Activated CD4-positive, alpha-beta T cell treated with anti-CD3 and anti-CD28 coated beads for 36 hours (primary cell): ENCODE measurements at regions of chr12 and their contacts with region 1.

Region 1: GRCh38 chr12:54398995-54399793 is 14.7 kb upstream of the ZNF385A start:
- DNase-seq: peak; percentile 92
- ATAC-seq: peak; percentile 95
- H3K4me3 Mint-ChIP-seq: no peak overlapping the region
- H3K27ac Mint-ChIP-seq: no peak overlapping the region
- H3K4me1 Mint-ChIP-seq: peaks cover 6% of the 10 kb centered on the region
- H3K27me3 Mint-ChIP-seq: no peaks in the 10 kb centered on the region

Region 2: DNA sequence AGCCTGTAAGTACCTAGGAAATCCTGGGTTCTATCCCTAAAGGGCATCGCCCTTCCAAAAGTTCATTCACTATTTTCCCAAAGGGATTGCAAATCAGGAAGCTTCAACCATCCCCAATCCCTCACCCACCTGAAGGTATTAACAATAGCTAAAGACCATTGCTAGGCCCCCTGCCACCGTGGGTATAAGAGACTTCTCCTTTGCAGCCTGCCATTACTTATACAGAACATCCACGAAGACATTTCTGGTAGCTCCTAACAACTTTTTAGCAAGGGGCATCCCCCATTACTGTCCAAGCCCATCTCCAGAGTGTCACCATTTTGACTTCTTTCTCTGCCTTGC is 210.0 kb before region 1 on chr12:
- CTCF ChIA-PET with region 1: no interaction called
- POLR2A ChIA-PET with region 1: no interaction called
- intact Hi-C with region 1: no loop called
- DNase-seq: no peak
- ATAC-seq: peak; percentile 2
- H3K4me3 Mint-ChIP-seq: peak overlapping the region; percentile 85
- H3K27ac Mint-ChIP-seq: no peak overlapping the region
- H3K4me1 Mint-ChIP-seq: peaks cover 20% of the 10 kb centered on the region
- H3K27me3 Mint-ChIP-seq: peaks cover 19% of the 10 kb centered on the region

Region 3: DNA sequence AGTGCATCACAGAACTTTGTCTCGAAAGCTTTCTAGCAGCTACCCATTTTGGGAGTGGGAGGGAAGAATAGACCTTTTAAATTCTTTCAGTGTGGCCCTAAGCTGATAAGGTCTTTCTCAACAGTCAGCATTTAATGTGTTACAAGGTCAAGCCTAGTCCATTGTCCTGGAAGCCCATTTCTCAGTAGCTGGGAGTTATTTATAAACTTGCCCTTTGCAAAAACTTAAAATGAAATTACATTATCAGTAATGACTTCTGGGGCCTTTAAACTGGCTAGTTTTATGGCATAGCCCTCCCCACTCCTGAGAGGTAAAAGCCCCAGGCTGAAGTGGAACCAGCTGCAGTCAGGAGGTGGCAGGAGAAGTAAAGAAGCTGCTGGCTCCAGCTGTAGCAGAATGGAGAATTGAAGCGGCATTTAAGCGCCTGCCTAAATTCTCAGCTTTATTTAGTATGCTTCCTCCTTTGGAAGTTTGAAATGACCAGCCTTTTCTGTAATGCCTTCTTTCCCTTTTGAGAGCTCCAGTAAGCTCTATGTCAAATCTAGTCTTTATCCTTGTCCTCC is 61.8 kb before region 1 on chr12:
- CTCF ChIA-PET with region 1: interaction called, 13 read pairs
- POLR2A ChIA-PET with region 1: no interaction called
- intact Hi-C with region 1: no loop called
- DNase-seq: no peak
- ATAC-seq: no peak
- H3K4me3 Mint-ChIP-seq: no peak overlapping the region
- H3K27ac Mint-ChIP-seq: no peak overlapping the region
- H3K4me1 Mint-ChIP-seq: peaks cover 13% of the 10 kb centered on the region
- H3K27me3 Mint-ChIP-seq: no peaks in the 10 kb centered on the region

Region 4: GRCh38 chr12:54411391-54412241 is 12.4 kb after region 1 on chr12:
- CTCF ChIA-PET with region 1: interaction called, 260 read pairs
- POLR2A ChIA-PET with region 1: interaction called, 3 read pairs
- intact Hi-C with region 1: loop called in 1 of 2 experiments (anchors 2 kb)
- DNase-seq: peak; percentile 80
- ATAC-seq: peak; percentile 85
- H3K4me3 Mint-ChIP-seq: peak overlapping the region; percentile 60
- H3K27ac Mint-ChIP-seq: peak overlapping the region; percentile 89
- H3K4me1 Mint-ChIP-seq: peaks cover 55% of the 10 kb centered on the region
- H3K27me3 Mint-ChIP-seq: no peaks in the 10 kb centered on the region

Region 5: GRCh38 chr12:54439521-54440255 is 40.5 kb after region 1 on chr12:
- CTCF ChIA-PET with region 1: interaction called, 638 read pairs
- POLR2A ChIA-PET with region 1: no interaction called
- intact Hi-C with region 1: loop called (anchors 1 kb)
- DNase-seq: no peak
- ATAC-seq: peak; percentile 85
- H3K4me3 Mint-ChIP-seq: no peak overlapping the region
- H3K27ac Mint-ChIP-seq: no peak overlapping the region
- H3K4me1 Mint-ChIP-seq: peaks cover 9% of the 10 kb centered on the region
- H3K27me3 Mint-ChIP-seq: no peaks in the 10 kb centered on the region

Region 6: GRCh38 chr12:54497883-54498282 is 98.7 kb after region 1 on chr12:
- CTCF ChIA-PET with region 1: interaction called, 15 read pairs
- POLR2A ChIA-PET with region 1: no interaction called
- intact Hi-C with region 1: no loop called
- DNase-seq: no peak
- ATAC-seq: peak; percentile 4
- H3K4me3 Mint-ChIP-seq: peak overlapping the region; percentile 99
- H3K27ac Mint-ChIP-seq: peak overlapping the region; percentile 98
- H3K4me1 Mint-ChIP-seq: peaks cover 39% of the 10 kb centered on the region
- H3K27me3 Mint-ChIP-seq: no peaks in the 10 kb centered on the region